MCF 10A (cell line): ENCODE measurements at regions of chr11 and their contacts with region 1.

Region 1: DNA sequence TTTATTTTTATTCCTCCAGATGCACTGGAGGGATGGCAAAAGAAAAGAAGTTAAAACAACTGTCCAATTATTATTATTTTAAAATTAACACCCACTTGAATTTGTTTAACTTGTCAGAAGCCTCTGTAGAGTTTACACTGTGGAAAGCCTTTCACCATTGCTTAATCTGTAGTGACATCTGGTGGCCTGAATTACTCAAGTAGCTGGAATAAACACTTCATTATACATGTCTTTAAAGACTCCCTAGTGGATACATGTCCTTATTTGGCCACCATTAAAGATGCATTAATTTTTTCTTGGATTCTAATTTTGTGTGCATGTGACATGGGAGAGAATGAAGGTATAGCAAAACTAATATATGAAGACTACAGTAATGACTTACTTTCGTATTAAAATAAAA is 1496.5 kb downstream of the FAM181B start:
- DNase-seq: peak; percentile 65
- H3K4me3 Mint-ChIP-seq: no peak overlapping the region
- H3K27ac Mint-ChIP-seq: no peak overlapping the region
- H3K4me1 Mint-ChIP-seq: no peaks in the 10 kb centered on the region
- H3K27me3 Mint-ChIP-seq: peaks cover 14% of the 10 kb centered on the region
- CTCF ChIP-seq: peak; percentile 59

Region 2: GRCh38 chr11:79973721-79974617 is 1263.2 kb before region 1 on chr11:
- CTCF ChIA-PET with region 1: no interaction called
- POLR2A ChIA-PET with region 1: no interaction called
- intact Hi-C with region 1: no loop called
- DNase-seq: peak; percentile 61
- H3K4me3 Mint-ChIP-seq: no peak overlapping the region
- H3K27ac Mint-ChIP-seq: no peak overlapping the region
- H3K4me1 Mint-ChIP-seq: peaks cover 7% of the 10 kb centered on the region
- H3K27me3 Mint-ChIP-seq: peaks cover 8% of the 10 kb centered on the region
- CTCF ChIP-seq: no peak

Region 3: GRCh38 chr11:80155412-80156017 is 1081.6 kb before region 1 on chr11:
- CTCF ChIA-PET with region 1: interaction called, 3 read pairs
- POLR2A ChIA-PET with region 1: no interaction called
- intact Hi-C with region 1: loop called (anchors 2 kb)
- DNase-seq: peak; percentile 55
- H3K4me3 Mint-ChIP-seq: no peak overlapping the region
- H3K27ac Mint-ChIP-seq: no peak overlapping the region
- H3K4me1 Mint-ChIP-seq: no peaks in the 10 kb centered on the region
- H3K27me3 Mint-ChIP-seq: peaks cover 9% of the 10 kb centered on the region
- CTCF ChIP-seq: peak; percentile 67

Region 4: DNA sequence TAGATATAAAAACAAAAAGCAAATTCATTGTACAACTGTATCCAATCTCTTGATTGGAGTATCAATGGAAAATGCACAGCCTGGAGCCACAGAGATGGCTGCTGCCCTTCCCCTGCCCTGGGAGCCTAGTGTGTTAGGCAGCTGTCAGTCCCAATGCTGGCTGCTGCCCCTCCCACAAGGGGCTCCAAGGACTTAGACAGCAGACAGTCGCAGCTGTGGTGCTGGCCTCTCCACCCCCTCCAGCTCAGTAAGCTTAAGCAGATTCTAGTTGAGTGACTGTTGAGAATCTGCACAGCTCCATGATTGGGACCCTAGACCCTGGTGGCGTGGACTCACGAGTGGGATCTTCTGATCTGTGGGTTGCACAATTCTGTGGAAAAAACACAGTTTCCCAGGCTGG is 14.6 kb before region 1 on chr11:
- CTCF ChIA-PET with region 1: interaction called, 12 read pairs
- POLR2A ChIA-PET with region 1: no interaction called
- intact Hi-C with region 1: no loop called
- DNase-seq: no peak
- H3K4me3 Mint-ChIP-seq: no peak overlapping the region
- H3K27ac Mint-ChIP-seq: no peak overlapping the region
- H3K4me1 Mint-ChIP-seq: peaks cover 6% of the 10 kb centered on the region
- H3K27me3 Mint-ChIP-seq: no peaks in the 10 kb centered on the region
- CTCF ChIP-seq: no peak

Region 5: DNA sequence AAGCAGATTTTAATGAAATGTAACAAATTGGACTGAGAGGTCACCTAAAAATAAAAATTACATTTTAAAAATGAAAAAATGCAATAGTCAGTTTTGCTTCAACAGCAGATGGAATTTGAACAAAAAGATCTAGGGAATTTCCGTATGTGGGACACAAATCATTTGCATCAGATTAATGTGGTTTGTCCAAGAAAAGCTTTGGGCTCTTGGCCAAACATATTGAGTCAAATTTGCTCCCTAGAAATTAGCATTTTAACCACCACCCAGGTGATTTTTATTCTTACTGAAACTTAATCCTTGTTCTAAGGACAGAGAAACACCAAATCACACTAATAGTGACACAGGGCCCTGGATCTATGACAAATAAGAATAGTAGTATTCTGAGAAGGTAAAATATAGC is 18.8 kb after region 1 on chr11:
- CTCF ChIA-PET with region 1: no interaction called
- POLR2A ChIA-PET with region 1: no interaction called
- intact Hi-C with region 1: no loop called
- DNase-seq: peak; percentile 9
- H3K4me3 Mint-ChIP-seq: no peak overlapping the region
- H3K27ac Mint-ChIP-seq: no peak overlapping the region
- H3K4me1 Mint-ChIP-seq: no peaks in the 10 kb centered on the region
- H3K27me3 Mint-ChIP-seq: peaks cover 11% of the 10 kb centered on the region
- CTCF ChIP-seq: no peak